ENCODE measurements at regions of chr10 and their contacts with region 1.

Region 1: GRCh38 chr10:18157881-18158280 is 17.7 kb downstream of the CACNB2 start:
- DNase-seq: peak; percentile 85
- H3K4me3 Mint-ChIP-seq: peak overlapping the region; percentile 53
- H3K27ac Mint-ChIP-seq: peak overlapping the region; percentile 84
- H3K4me1 Mint-ChIP-seq: peaks cover 28% of the 10 kb centered on the region
- H3K27me3 Mint-ChIP-seq: no peaks in the 10 kb centered on the region
- CTCF ChIP-seq: no peak

Region 2: GRCh38 chr10:18140149-18140956 is 17.5 kb before region 1 on chr10 and contains the start of gene CACNB2:
- CTCF ChIA-PET with region 1: interaction called, 3 read pairs
- POLR2A ChIA-PET with region 1: interaction called, 43 read pairs
- intact Hi-C with region 1: no loop called
- DNase-seq: peak; percentile 53
- H3K4me3 Mint-ChIP-seq: peak within 1 kb of the TSS; percentile 88
- H3K27ac Mint-ChIP-seq: no peak within 1 kb of the TSS
- H3K4me1 Mint-ChIP-seq: peaks cover 27% of the 10 kb centered on the region
- H3K27me3 Mint-ChIP-seq: no peaks in the 10 kb centered on the region
- CTCF ChIP-seq: no peak
- total RNA-seq, gene CACNB2: 2.7 and 3.3 TPM in 2 replicates